Caco-2 (cell line): ENCODE measurements at regions of chr4 and their contacts with region 1.

Region 1: DNA sequence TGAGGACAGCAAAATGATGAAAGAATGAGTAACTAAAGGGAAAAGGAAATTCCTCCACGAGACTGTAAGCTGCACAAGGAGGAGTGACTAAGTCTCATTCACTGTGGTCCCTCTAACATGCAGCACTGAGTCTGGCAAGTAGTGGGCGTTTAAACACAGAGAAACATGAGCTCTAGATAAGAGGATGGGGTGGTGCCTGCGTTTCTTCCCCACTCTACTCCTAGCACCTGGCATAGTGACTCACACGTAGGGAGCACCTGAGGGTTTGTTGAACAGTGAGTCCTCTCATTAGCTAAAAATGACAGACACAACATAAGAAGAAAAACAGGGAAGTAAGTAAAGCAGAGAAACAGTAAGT is 105.8 kb upstream of the CBR4 start:
- DNase-seq: peak; percentile 29 to 52
- H3K4me3 ChIP-seq: no peak overlapping the region
- H3K4me3 Mint-ChIP-seq: no peak overlapping the region
- H3K27ac Mint-ChIP-seq: peak overlapping the region; percentile 37
- H3K4me1 ChIP-seq: peaks cover 7% of the 10 kb centered on the region; the same call in 1 of the 2 replicates
- H3K4me1 Mint-ChIP-seq: peaks cover 8% of the 10 kb centered on the region
- H3K27me3 ChIP-seq: no peaks in the 10 kb centered on the region
- H3K27me3 Mint-ChIP-seq: no peaks in the 10 kb centered on the region
- CTCF ChIP-seq: peak in 1 of 2 experiments; percentile 39

Region 2: DNA sequence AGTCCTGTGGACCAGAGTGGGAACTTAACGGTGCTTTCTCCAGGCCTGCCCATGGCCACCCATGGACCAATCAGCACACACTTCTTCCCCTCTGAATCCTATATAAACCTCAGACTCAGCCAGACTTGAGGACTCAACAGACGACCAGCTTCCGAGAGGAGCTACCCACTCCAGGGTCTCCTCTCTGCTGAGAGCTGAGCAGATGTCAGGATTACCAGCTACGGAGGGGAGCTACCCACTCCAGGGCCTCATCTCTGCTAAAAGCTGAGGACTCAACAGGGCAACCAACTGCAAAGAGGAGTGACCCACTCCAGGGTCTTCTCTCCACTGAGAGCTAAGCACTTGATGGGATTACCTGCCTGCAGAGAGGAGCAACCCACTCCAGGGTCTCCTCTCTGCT is 717.3 kb before region 1 on chr4:
- CTCF ChIA-PET with region 1: no interaction called
- POLR2A ChIA-PET with region 1: no interaction called
- intact Hi-C with region 1: no loop called
- DNase-seq: peak in 1 of 2 experiments; percentile 1
- H3K4me3 ChIP-seq: no peak overlapping the region
- H3K4me3 Mint-ChIP-seq: no peak overlapping the region
- H3K27ac Mint-ChIP-seq: no peak overlapping the region
- H3K4me1 ChIP-seq: no peaks in the 10 kb centered on the region
- H3K4me1 Mint-ChIP-seq: no peaks in the 10 kb centered on the region
- H3K27me3 ChIP-seq: no peaks in the 10 kb centered on the region
- H3K27me3 Mint-ChIP-seq: no peaks in the 10 kb centered on the region
- CTCF ChIP-seq: no peak

Region 3: GRCh38 chr4:169024762-169025161 is 91.1 kb before region 1 on chr4:
- CTCF ChIA-PET with region 1: interaction called, 4 read pairs
- POLR2A ChIA-PET with region 1: no interaction called
- intact Hi-C with region 1: loop called (anchors 5 kb)
- DNase-seq: peak in 1 of 2 experiments; percentile 43
- H3K4me3 ChIP-seq: no peak overlapping the region
- H3K4me3 Mint-ChIP-seq: no peak overlapping the region
- H3K27ac Mint-ChIP-seq: no peak overlapping the region
- H3K4me1 ChIP-seq: no peaks in the 10 kb centered on the region
- H3K4me1 Mint-ChIP-seq: no peaks in the 10 kb centered on the region
- H3K27me3 ChIP-seq: no peaks in the 10 kb centered on the region
- H3K27me3 Mint-ChIP-seq: no peaks in the 10 kb centered on the region
- CTCF ChIP-seq: peak; percentile 32 to 54

Region 4: DNA sequence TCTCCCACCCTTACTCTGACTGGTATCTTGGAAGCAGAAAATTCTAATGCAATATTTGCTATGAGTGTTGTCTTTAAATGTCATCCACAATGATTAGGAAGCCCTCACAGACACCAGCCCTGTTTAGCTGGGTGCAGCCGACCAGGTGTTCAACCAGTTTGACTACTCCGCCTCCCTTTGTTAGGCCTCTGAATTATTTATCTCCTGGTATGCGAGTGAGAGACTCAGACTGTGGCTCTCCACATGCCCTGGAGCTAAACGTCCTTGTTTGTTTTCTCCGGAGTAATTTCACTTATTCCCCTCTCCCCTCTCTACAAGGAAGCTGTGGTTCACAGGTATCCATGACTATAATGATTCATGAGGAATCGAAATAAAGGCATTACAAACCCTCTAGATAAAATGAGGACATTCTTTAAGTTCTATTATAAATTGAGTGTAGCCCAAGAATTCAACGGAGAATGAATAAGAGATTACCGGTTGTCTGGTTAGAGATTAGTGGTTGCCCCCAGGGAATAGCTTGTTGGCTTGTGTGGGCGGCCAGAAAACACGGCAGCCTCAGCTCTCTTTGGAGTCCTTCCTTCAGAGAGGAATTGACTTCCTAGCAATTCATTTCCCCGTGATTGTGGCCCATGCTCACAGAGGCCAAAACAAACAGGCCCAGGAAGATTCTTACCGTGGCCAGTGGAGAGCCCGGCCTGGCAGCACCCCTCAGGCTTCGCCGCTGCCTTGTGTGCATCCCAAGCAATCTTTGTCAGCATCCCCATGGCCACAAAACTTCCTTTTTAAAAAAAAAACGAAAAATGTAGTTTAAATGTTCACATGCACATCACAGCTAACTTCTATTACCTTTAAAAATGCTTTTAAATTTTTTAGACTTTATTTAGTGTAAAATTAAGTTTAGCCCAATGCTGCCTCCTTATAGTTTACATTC is 45.6 kb before region 1 on chr4:
- CTCF ChIA-PET with region 1: no interaction called
- POLR2A ChIA-PET with region 1: no interaction called
- intact Hi-C with region 1: no loop called
- DNase-seq: peak; percentile 90 to 93
- H3K4me3 ChIP-seq: no peak overlapping the region
- H3K4me3 Mint-ChIP-seq: peak overlapping the region; percentile 60
- H3K27ac Mint-ChIP-seq: peak overlapping the region; percentile 92
- H3K4me1 ChIP-seq: peaks cover 50% of the 10 kb centered on the region
- H3K4me1 Mint-ChIP-seq: peaks cover 30% of the 10 kb centered on the region
- H3K27me3 ChIP-seq: no peaks in the 10 kb centered on the region
- H3K27me3 Mint-ChIP-seq: no peaks in the 10 kb centered on the region
- CTCF ChIP-seq: no peak

Region 5: DNA sequence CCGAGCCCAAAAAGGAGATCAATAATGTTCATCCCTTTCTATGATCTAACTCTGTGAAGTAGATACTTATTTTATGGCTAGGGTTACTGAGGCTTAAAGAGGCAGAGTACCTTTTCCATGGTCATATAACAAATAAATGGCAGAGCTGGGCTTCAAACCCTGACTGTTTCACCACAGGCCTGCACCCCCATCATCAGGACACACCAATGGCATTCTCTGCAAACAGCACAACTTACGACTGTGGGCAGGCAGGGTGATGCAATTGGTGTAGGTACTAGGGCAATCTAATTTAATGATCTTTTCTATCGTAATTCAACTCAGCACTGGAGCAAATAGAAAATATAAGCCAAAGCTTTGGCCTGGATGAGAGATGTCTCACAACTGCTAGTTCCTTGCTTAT is 13.0 kb after region 1 on chr4:
- CTCF ChIA-PET with region 1: no interaction called
- POLR2A ChIA-PET with region 1: no interaction called
- intact Hi-C with region 1: no loop called
- DNase-seq: no peak
- H3K4me3 ChIP-seq: no peak overlapping the region
- H3K4me3 Mint-ChIP-seq: no peak overlapping the region
- H3K27ac Mint-ChIP-seq: no peak overlapping the region
- H3K4me1 ChIP-seq: no peaks in the 10 kb centered on the region
- H3K4me1 Mint-ChIP-seq: peaks cover 10% of the 10 kb centered on the region
- H3K27me3 ChIP-seq: no peaks in the 10 kb centered on the region
- H3K27me3 Mint-ChIP-seq: no peaks in the 10 kb centered on the region
- CTCF ChIP-seq: no peak